AG04450 (cell line): ENCODE measurements at regions of chr6 and their contacts with region 1.

Region 1: DNA sequence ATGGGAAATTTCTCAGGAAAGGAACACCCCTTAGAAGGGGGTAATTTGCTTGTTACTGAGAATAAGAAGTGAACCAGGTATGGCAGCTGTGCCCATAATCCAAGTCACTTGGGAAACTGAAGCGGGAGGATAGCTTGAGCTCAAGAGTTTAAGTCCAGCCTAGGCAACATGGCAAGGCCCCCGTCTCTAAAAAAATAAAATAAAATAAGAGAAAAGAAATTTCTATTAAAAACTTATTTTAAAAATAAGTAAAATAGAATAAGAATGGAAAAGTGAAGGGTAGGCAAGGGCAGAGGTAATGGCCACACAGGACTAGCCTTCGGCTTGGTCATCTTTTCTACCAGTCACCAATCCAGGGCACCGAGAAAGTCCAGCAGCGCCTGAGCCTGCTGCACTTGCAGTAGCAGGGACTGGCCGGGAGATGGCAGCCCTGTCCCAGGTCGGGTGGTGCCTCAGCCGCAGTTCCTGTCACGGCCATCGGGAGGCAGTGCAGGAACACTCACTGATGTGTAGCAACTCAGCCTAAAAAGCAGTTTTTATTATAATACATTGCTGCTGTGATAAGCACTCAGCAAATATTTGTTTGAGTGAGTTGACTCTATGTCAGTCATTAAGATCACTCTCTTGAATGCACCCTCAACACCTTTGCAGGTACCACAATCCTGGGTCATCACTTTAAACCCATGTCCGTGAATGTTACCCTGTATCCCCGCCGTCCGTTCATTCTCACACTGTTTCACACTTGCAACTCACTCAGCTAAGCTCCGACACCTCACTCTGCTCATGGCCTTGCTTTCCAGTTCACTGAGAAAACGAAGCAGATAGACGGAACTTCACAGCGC is 23.2 kb upstream of the GCM1 start:
- DNase-seq: peak; percentile 55
- H3K4me3 ChIP-seq: no peak overlapping the region
- H3K27ac ChIP-seq: no peak overlapping the region
- H3K27me3 ChIP-seq: no peaks in the 10 kb centered on the region
- CTCF ChIP-seq: peak; percentile 100

Region 2: DNA sequence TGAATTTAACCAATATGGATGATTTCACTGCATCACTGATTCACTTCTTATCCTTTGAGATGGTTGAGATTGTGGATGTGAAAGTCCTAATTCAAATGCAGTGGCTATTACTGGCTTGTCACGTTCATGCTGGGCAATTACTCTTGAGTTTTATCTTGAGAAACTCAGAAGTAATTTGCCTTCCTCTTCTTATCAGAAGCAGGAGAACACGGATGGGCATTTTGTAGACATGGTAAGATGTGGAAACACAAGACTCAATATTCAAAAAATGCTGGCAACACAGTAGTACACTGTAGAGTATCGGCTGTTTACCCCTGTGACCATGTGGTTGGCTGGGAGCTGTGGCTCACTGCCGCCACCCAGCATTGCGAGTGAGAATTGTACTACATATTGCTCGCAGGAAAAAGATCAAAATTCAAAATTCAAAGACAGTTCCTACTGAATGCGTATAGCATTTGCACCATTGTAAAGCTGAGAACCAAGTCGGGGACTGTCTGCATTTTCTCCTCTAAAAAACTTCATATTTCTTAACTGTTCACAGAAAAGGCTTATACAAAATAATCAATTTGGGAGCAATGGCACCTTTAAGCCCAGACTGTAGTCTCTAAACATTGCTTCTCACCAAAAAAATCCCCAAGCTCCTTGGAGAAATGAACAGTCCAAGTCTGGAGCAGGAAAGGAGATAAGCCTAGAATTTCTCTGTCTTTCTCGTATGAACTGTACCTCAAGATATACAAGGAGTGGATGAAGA is 238.9 kb after region 1 on chr6:
- CTCF ChIA-PET with region 1: interaction called, 49 read pairs
- POLR2A ChIA-PET with region 1: no interaction called
- DNase-seq: no peak
- H3K4me3 ChIP-seq: no peak overlapping the region
- H3K27ac ChIP-seq: no peak overlapping the region
- H3K27me3 ChIP-seq: peaks cover 16% of the 10 kb centered on the region
- CTCF ChIP-seq: peak; percentile 78

Region 3: DNA sequence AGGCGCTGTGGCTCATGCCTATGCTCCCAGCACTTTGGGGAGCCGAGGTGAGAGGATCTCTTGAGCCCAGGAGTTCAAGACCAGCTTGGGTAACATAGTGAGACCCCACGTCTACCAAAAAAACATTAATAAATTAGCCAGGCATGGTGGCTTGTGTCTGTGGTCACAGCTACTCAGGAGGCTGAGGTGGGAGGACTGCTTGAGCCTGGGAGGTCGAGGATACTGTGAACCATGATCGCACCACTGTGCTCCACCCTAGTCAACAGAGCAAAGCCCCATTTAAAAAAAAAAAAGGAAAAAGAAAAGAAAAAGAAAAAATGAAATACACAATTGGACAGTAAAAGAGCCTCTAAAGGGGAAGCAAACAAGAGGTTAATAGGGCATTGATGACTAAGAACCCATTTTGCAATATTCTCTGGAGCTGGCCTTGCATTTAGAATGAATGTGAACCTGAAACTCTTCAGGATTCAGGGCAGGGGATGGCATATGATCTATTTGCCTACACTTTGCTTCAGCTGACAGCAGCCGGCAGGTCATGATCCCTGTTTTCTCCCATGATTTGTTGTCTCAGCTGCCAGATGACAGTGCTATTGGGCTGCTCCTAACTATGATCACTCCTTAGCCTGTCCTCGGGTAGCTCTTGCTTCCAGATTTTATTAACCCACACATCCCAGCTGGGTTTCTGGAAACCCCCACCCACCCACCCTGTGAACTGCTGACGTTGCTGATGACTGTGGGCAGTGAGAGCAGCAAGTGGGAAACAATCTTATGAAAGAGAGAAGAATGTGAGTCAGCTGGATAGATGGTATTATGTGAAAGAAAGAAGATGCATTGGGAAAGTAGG is 260.7 kb after region 1 on chr6:
- CTCF ChIA-PET with region 1: interaction called, 47 read pairs
- POLR2A ChIA-PET with region 1: no interaction called
- DNase-seq: peak; percentile 37
- H3K4me3 ChIP-seq: no peak overlapping the region
- H3K27ac ChIP-seq: peak overlapping the region; percentile 68
- H3K27me3 ChIP-seq: no peaks in the 10 kb centered on the region
- CTCF ChIP-seq: no peak

Region 4: DNA sequence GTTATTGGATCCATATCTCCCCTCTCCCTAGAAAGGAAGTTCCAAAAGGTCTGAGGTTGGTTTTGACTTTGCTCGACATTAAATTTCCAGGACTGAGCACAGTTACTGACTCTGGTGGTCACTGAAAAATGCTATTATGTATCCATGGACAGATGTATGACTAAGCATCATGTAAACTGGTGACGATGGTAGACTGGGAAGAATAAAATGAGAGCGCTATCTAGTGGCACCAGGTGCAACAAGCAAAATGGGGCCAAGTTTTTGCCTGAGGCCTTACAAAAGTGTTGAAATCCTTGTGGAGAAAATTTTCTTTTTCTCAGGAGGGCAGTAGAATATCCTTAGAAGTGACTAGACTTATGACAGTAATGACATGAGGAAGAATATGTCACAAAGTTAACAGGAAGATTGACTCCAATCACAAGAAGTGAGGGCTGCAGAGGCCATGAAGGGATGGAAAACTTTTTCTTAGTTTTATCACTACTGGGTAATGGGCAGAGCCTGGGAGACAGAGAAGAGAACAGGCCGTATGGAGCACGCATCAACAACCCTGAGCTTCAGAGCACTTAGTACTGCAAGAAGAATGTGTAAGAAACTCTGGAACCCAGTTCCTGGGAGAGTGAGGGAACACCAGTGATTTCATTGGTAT is 265.9 kb after region 1 on chr6:
- CTCF ChIA-PET with region 1: interaction called, 47 read pairs
- POLR2A ChIA-PET with region 1: no interaction called
- DNase-seq: peak; percentile 60
- H3K4me3 ChIP-seq: no peak overlapping the region
- H3K27ac ChIP-seq: no peak overlapping the region
- H3K27me3 ChIP-seq: no peaks in the 10 kb centered on the region
- CTCF ChIP-seq: peak; percentile 75

Region 5: GRCh38 chr6:53447869-53448268 is 276.0 kb after region 1 on chr6:
- CTCF ChIA-PET with region 1: interaction called, 14 read pairs
- POLR2A ChIA-PET with region 1: no interaction called
- DNase-seq: no peak
- H3K4me3 ChIP-seq: no peak overlapping the region
- H3K27ac ChIP-seq: no peak overlapping the region
- H3K27me3 ChIP-seq: no peaks in the 10 kb centered on the region
- CTCF ChIP-seq: no peak

Region 6: GRCh38 chr6:53476964-53477363 is 305.1 kb after region 1 on chr6:
- CTCF ChIA-PET with region 1: interaction called, 15 read pairs
- POLR2A ChIA-PET with region 1: no interaction called
- DNase-seq: no peak
- H3K4me3 ChIP-seq: no peak overlapping the region
- H3K27ac ChIP-seq: no peak overlapping the region
- H3K27me3 ChIP-seq: peaks cover 8% of the 10 kb centered on the region
- CTCF ChIP-seq: no peak

Region 7: GRCh38 chr6:53484476-53485280 is 312.9 kb after region 1 on chr6:
- CTCF ChIA-PET with region 1: interaction called, 196 read pairs
- POLR2A ChIA-PET with region 1: no interaction called
- DNase-seq: no peak
- H3K4me3 ChIP-seq: no peak overlapping the region
- H3K27ac ChIP-seq: no peak overlapping the region
- H3K27me3 ChIP-seq: peaks cover 12% of the 10 kb centered on the region
- CTCF ChIP-seq: peak; percentile 98